ENCODE measurements at regions of chr19 and their contacts with region 1.

Region 1: GRCh38 chr19:12777217-12778016 is 2.1 kb upstream of the HOOK2 start:
- DNase-seq: peak; percentile 90
- ATAC-seq: peak; percentile 24
- H3K4me3 Mint-ChIP-seq: peak overlapping the region; percentile 82
- H3K27ac Mint-ChIP-seq: peak overlapping the region; percentile 95
- H3K4me1 Mint-ChIP-seq: peaks cover 45% of the 10 kb centered on the region
- H3K27me3 Mint-ChIP-seq: no peaks in the 10 kb centered on the region

Region 2: DNA sequence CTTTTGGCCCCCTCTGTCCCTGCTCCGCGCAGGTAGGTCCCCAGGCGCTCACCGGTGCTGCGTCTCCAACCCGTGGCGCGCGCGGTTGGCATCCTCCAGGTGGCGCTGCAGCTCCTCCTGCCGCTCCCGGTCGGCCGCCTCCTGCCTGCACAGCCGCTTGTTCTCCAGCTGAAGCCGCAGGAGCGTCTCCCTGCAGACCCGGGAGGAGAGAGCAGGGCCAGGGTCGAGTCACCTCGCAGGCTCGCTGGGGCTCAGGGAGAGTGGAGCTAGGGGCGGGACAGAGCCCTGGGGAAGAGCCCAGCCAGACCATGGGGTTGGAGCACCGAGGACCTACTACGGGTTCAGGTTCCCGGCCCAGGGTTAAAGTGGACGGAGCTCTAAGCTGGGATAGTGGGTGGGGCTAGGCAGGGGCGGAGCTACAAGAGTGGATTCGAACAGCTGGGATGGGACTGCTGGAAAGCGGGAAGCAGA is 11.3 kb before region 1 on chr19:
- CTCF ChIA-PET with region 1: interaction called, 14 read pairs
- POLR2A ChIA-PET with region 1: no interaction called
- intact Hi-C with region 1: no loop called
- DNase-seq: peak; percentile 94
- ATAC-seq: peak; percentile 83
- H3K4me3 Mint-ChIP-seq: peak overlapping the region; percentile 17
- H3K27ac Mint-ChIP-seq: no peak overlapping the region
- H3K4me1 Mint-ChIP-seq: peaks cover 10% of the 10 kb centered on the region
- H3K27me3 Mint-ChIP-seq: no peaks in the 10 kb centered on the region

Region 3: GRCh38 chr19:12806239-12807081 is 29.0 kb after region 1 on chr19 and contains the start of gene RNASEH2A:
- CTCF ChIA-PET with region 1: interaction called, 285 read pairs
- POLR2A ChIA-PET with region 1: no interaction called
- intact Hi-C with region 1: loop called in 1 of 2 experiments (anchors 1 kb)
- DNase-seq: peak; percentile 94
- ATAC-seq: peak; percentile 93
- H3K4me3 Mint-ChIP-seq: peak within 1 kb of the TSS; percentile 89
- H3K27ac Mint-ChIP-seq: peak within 1 kb of the TSS; percentile 80
- H3K4me1 Mint-ChIP-seq: peaks cover 24% of the 10 kb centered on the region
- H3K27me3 Mint-ChIP-seq: no peaks in the 10 kb centered on the region
- total RNA-seq, gene RNASEH2A: 27.0 to 51.1 TPM

Region 4: GRCh38 chr19:12847159-12848139 is 70.0 kb after region 1 on chr19:
- CTCF ChIA-PET with region 1: interaction called, 8 read pairs
- POLR2A ChIA-PET with region 1: no interaction called
- intact Hi-C with region 1: loop called in 1 of 2 experiments (anchors 2 kb)
- DNase-seq: peak; percentile 94
- ATAC-seq: peak; percentile 98
- H3K4me3 Mint-ChIP-seq: peak overlapping the region; percentile 57
- H3K27ac Mint-ChIP-seq: no peak overlapping the region
- H3K4me1 Mint-ChIP-seq: peaks cover 7% of the 10 kb centered on the region
- H3K27me3 Mint-ChIP-seq: peaks cover 24% of the 10 kb centered on the region

Region 5: GRCh38 chr19:12913851-12914690 is 136.7 kb after region 1 on chr19:
- CTCF ChIA-PET with region 1: no interaction called
- POLR2A ChIA-PET with region 1: no interaction called
- intact Hi-C with region 1: loop called in 1 of 2 experiments (anchors 1 kb)
- DNase-seq: peak; percentile 70
- ATAC-seq: peak; percentile 81
- H3K4me3 Mint-ChIP-seq: peak overlapping the region; percentile 36
- H3K27ac Mint-ChIP-seq: peak overlapping the region; percentile 94
- H3K4me1 Mint-ChIP-seq: peaks cover 26% of the 10 kb centered on the region
- H3K27me3 Mint-ChIP-seq: no peaks in the 10 kb centered on the region